Heart left ventricle (tissue), 16 donors: ENCODE measurements at regions of chr15 and their contacts with region 1.

Region 1: DNA sequence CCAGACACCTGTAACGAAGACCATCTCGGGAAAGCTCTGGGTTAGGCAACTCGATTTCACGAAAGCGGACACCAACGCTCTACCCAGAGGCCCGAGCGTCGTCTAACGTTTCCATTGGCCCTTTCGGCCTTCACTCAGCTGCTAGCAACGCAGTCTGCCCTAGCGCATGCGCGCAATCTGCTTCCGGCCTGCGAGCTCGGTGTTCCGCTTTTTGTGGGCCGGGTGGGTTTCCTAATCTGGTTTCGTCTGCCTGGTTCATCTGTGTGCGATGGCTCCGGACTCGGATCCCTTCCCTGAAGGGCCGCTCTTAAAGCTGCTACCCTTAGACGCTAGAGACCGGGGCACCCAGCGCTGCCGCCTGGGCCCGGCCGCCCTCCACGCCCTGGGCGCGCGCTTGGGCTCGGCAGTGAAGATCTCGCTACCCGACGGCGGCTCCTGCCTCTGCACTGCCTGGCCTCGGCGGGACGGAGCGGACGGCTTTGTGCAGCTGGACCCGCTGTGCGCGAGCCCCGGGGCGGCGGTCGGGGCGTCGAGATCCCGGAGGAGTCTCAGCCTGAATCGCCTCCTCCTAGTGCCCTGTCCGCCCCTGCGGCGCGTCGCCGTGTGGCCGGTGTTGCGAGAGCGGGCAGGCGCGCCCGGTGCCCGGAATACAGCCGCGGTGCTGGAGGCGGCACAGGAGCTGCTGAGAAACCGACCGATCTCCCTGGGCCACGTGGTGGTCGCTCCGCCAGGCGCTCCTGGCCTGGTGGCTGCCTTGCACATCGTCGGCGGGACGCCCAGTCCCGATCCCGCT is 24.0 kb upstream of the GATM start:
- DNase-seq: peak; percentile 98 to 99 (median 98)
- ATAC-seq: peak; percentile 98 to 99 (median 98)
- H3K4me3 ChIP-seq: peak overlapping the region; percentile 68 to 98 (median 86)
- H3K27ac ChIP-seq: peak overlapping the region; percentile 77 to 97 (median 90)
- H3K4me1 ChIP-seq: peaks cover 0 to 35% (median 19%) of the 10 kb centered on the region in 12 donors
- H3K27me3 ChIP-seq: no peaks in the 10 kb centered on the region
- CTCF ChIP-seq: peak in 1 of 12 donors; percentile 5
- POLR2A ChIP-seq: peak in 1 of 2 donors; percentile 74

Region 2: DNA sequence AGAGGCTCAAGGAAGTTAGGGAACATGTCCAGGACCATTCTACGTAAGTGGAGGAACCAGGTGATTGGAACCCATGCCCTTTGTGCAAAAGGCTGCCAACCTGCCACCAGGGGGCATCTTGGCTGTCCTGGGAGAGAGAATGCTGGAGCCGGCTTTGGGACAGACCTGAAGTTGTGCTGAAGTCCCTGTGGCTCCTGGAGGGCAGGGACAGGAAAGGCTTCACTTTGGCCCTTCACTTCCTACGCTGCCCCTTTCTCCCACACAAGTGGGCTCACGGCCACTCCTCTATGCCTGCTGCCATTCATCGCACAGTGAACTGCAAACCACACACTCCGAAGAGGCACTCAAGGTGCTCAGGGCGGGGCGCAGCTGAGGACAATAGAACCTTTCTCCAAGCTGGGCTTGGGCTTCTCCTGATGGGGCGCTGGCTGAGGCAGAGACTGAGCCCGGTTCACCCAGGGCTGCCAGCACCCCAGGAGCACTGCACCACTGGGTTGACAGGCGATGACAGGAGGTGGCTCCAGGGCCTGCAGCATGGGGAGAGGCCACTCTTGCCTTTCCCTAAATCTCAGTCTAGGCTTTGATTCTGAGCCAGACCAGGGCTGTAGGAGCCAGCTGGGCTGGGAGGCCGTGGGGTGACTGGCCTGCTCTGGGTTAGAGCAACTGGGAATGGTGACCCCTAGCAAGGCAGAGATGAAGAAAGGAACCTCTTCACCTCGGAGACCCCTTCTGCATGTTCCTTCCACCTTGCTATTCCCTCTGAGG is 223.0 kb before region 1 on chr15:
- intact Hi-C with region 1: loop called in 1 of 10 experiments (anchors 10 kb)
- DNase-seq: no peak
- ATAC-seq: peak in 1 of 4 donors; percentile 17
- H3K4me3 ChIP-seq: no peak overlapping the region
- H3K27ac ChIP-seq: no peak overlapping the region
- H3K4me1 ChIP-seq: no peaks in the 10 kb centered on the region
- H3K27me3 ChIP-seq: no peaks in the 10 kb centered on the region
- CTCF ChIP-seq: peak; percentile 19 to 55 (median 41)
- POLR2A ChIP-seq: no peak

Region 3: GRCh38 chr15:45205192-45205591 is 197.2 kb before region 1 on chr15:
- intact Hi-C with region 1: loop called in 8 of 10 experiments (anchors 1 to 10 kb)
- DNase-seq: peak in 3 of 5 donors; percentile 43 to 60 (median 48)
- ATAC-seq: no peak
- H3K4me3 ChIP-seq: no peak overlapping the region
- H3K27ac ChIP-seq: no peak overlapping the region
- H3K4me1 ChIP-seq: peaks cover 0 to 36% (median 0%) of the 10 kb centered on the region in 12 donors
- H3K27me3 ChIP-seq: no peaks in the 10 kb centered on the region
- CTCF ChIP-seq: peak; percentile 65 to 80 (median 72)
- POLR2A ChIP-seq: no peak

Region 4: DNA sequence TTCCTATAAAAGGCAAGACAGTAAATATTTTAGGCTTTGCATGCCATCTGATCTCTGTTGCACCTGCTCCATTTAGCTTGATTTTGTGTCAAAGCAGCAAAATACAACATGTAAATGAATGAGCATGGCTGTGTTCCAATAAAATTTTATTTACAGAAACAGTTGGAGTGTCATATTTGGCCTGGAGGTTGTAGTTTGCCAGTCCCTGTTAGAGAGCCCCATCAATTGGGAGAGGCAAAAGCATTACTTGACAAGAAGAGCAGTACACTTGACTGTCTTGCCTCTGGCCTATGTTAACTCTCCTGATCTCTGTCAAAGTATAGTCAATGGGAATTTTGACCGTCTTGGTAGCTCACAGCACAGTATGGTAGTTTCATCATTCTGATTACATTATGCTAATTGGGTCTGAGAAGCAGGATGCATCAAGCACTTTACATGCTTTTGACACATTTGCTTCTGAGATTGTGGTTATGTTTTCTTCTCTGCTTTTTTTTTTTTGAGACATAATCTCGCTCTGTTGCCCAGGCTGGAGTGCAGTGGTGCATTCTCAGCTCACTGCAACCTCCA is 114.9 kb before region 1 on chr15:
- intact Hi-C with region 1: loop called in 1 of 10 experiments (anchors 5 kb)
- DNase-seq: no peak
- ATAC-seq: no peak
- H3K4me3 ChIP-seq: no peak overlapping the region
- H3K27ac ChIP-seq: no peak overlapping the region
- H3K4me1 ChIP-seq: peaks cover 0 to 24% (median 7%) of the 10 kb centered on the region in 12 donors
- H3K27me3 ChIP-seq: no peaks in the 10 kb centered on the region
- CTCF ChIP-seq: no peak
- POLR2A ChIP-seq: no peak

Region 5: GRCh38 chr15:45522328-45523160 is 120.2 kb after region 1 on chr15 and contains the start of gene SLC30A4:
- intact Hi-C with region 1: no loop called
- DNase-seq: peak; percentile 71 to 87 (median 75)
- ATAC-seq: peak; percentile 86 to 98 (median 95)
- H3K4me3 ChIP-seq: peak within 1 kb of the TSS; percentile 71 to 98 (median 89)
- H3K27ac ChIP-seq: peak within 1 kb of the TSS; percentile 69 to 90 (median 84)
- H3K4me1 ChIP-seq: peaks cover 0 to 29% (median 15%) of the 10 kb centered on the region in 12 donors
- H3K27me3 ChIP-seq: peaks cover 0 to 9% (median 0%) of the 10 kb centered on the region in 9 donors
- CTCF ChIP-seq: peak in 11 of 12 donors; percentile 33 to 74 (median 51)
- POLR2A ChIP-seq: peak in 1 of 2 donors; percentile 75
- total RNA-seq, gene SLC30A4: 2.5 to 4.7 (median 3.4) TPM

Region 6: GRCh38 chr15:45587095-45587860 is 184.9 kb after region 1 on chr15 and contains the start of gene BLOC1S6:
- intact Hi-C with region 1: loop called in 3 of 10 experiments (anchors 1 to 5 kb)
- DNase-seq: peak; percentile 89 to 93 (median 92)
- ATAC-seq: peak; percentile 92 to 95 (median 94)
- H3K4me3 ChIP-seq: peak within 1 kb of the TSS; percentile 72 to 98 (median 92)
- H3K27ac ChIP-seq: peak within 1 kb of the TSS; percentile 94 to 99 (median 98)
- H3K4me1 ChIP-seq: peaks cover 6 to 55% (median 32%) of the 10 kb centered on the region in 12 donors
- H3K27me3 ChIP-seq: no peaks in the 10 kb centered on the region
- CTCF ChIP-seq: no peak
- POLR2A ChIP-seq: peak in 1 of 2 donors; percentile 63
- total RNA-seq, gene BLOC1S6: 21.4 to 38.9 (median 27.0) TPM